CD8-positive, alpha-beta T cell (primary cell): ENCODE measurements at regions of chr17 and their contacts with region 1.

Region 1: DNA sequence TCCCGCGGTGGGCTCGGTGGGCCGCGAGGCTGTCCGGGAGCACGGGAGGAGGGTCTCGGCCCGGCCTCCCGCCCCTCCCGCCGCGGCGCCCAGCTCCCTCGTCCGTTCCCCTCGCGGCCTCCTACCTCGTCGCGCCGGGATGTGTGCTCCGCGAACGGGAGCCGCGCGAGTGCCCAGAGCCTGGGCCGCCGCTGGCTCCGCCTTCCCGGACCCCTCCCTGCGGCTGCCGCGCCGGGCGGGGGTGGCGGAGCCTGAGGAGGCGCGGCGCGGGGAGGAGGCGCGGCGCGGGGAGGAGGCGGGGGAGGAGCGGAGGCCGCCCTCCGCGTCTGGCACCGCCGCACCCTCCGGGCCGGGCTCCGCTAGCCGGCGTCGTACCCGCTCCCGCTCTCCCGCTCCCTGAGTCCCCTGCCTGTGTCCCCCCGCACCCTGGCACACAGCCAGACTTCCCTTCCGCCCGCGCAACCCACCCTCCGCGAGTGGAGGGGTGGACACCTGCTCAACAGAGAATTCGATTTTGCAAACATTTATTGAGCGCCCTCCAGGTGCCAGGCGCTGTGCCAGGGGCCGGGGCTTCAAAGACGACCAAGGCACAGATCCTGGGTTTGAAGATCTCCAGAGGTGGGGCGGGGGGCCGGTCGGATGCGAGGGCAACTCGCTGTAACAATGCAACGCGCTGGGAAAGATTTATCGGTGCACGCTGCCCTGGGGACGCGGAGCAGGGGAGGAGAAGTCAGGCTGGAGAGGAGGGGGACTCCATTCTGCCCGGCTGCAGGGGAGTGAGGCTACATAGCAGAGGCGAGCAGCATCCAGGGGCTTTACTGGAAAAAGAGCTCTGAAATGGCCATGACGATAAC is at the start of gene MPP3:
- DNase-seq: peak; percentile 9 to 76 (median 44)
- ATAC-seq: peak; percentile 95
- H3K4me3 ChIP-seq: peak within 1 kb of the TSS; percentile 47 to 74
- H3K4me3 Mint-ChIP-seq: peak within 1 kb of the TSS; percentile 80
- H3K27ac ChIP-seq: no peak within 1 kb of the TSS
- H3K27ac Mint-ChIP-seq: no peak within 1 kb of the TSS
- H3K4me1 ChIP-seq: peaks cover 9% of the 10 kb centered on the region
- H3K4me1 Mint-ChIP-seq: peaks cover 15% of the 10 kb centered on the region
- H3K27me3 ChIP-seq: peaks cover 7 to 9% of the 10 kb centered on the region in 2 experiments
- H3K27me3 Mint-ChIP-seq: peaks cover 32% of the 10 kb centered on the region
- CTCF ChIP-seq: no peak
- total RNA-seq, gene MPP3: not detected

Region 2: DNA sequence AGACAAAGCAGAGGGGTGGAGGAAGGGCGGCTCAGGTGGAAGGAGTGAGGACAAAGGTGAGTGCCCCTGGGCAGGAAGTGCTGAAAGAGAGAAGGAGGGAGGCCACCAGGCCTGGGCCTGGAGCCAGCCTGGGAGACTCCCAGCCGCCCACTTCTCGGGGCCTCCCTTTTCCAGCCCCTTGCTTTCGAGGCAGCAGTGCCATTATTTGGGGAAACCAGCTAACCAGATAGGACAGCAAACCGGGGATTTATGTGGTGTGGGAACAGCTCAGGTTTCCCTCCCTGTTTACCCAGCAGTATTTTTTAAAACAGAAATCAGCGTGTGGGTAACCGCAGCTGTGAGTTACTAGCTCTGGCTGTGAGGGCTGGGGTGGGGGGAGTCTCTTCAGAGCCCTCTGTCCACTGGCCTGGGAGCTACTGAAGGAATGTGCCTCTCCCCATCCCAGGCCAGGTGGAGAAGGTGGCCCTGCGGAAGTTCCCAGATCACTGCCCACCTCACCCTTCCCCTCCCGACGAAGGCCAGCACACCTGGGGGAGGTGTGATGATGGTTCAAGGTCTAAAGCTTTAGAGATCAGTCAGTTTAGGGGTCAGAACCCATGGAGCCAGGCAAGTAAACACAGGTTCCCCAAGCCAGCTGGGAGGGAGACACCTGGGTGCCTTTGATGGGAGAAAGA is 163.1 kb before region 1 on chr17:
- CTCF ChIA-PET with region 1: no interaction called
- POLR2A ChIA-PET with region 1: no interaction called
- intact Hi-C with region 1: no loop called
- DNase-seq: no peak
- ATAC-seq: no peak
- H3K4me3 ChIP-seq: no peak overlapping the region
- H3K4me3 Mint-ChIP-seq: no peak overlapping the region
- H3K27ac ChIP-seq: no peak overlapping the region
- H3K27ac Mint-ChIP-seq: no peak overlapping the region
- H3K4me1 ChIP-seq: peaks cover 4% of the 10 kb centered on the region
- H3K4me1 Mint-ChIP-seq: peaks cover 6% of the 10 kb centered on the region
- H3K27me3 ChIP-seq: no peaks in the 10 kb centered on the region
- H3K27me3 Mint-ChIP-seq: no peaks in the 10 kb centered on the region
- CTCF ChIP-seq: no peak

Region 3: DNA sequence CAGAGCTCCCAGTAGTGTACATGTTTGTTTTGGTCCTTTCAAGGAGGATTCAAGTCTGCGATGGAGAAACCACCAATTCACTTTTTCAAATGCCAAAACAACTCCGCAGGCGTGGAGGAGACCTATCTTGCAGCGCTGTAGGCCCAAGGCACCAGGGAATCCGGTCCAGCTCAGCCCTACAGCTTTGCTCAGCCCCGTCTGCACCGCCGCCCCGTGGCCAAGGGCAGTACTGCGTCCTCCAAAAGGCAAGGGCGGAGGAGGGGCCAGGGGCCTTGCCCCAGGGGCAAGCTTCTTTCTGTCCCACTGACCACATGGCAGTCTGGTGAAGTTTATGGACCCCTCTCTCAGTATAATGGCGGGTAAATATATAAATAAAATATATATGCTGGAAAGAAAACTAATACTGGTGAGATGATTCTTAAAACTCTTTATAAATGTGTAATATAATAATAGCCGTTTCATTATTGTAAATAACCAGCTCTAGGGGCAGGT is 13.1 kb after region 1 on chr17:
- CTCF ChIA-PET with region 1: interaction called, 3 read pairs
- POLR2A ChIA-PET with region 1: no interaction called
- intact Hi-C with region 1: loop called in 1 of 2 experiments (anchors 1 kb)
- DNase-seq: peak; percentile 55 to 83 (median 72)
- ATAC-seq: peak; percentile 100
- H3K4me3 ChIP-seq: no peak overlapping the region
- H3K4me3 Mint-ChIP-seq: no peak overlapping the region
- H3K27ac ChIP-seq: no peak overlapping the region
- H3K27ac Mint-ChIP-seq: no peak overlapping the region
- H3K4me1 ChIP-seq: no peaks in the 10 kb centered on the region
- H3K4me1 Mint-ChIP-seq: no peaks in the 10 kb centered on the region
- H3K27me3 ChIP-seq: peaks cover 0 to 2% of the 10 kb centered on the region in 2 experiments
- H3K27me3 Mint-ChIP-seq: peaks cover 31% of the 10 kb centered on the region
- CTCF ChIP-seq: peak; percentile 91